ENCODE measurements at regions of chr21 and their contacts with region 1.

Region 1: GRCh38 chr21:38229260-38229868 is 27.4 kb upstream of the KCNJ15 start:
- DNase-seq: peak; percentile 20
- H3K4me3 ChIP-seq: no peak overlapping the region
- H3K27ac ChIP-seq: no peak overlapping the region
- H3K4me1 ChIP-seq: peaks cover 14% of the 10 kb centered on the region
- H3K27me3 ChIP-seq: no peaks in the 10 kb centered on the region
- CTCF ChIP-seq: no peak

Region 2: GRCh38 chr21:38349111-38349746 is 119.9 kb after region 1 on chr21:
- CTCF ChIA-PET with region 1: interaction called, 5 read pairs
- dilution Hi-C with region 1: loop called (anchors 5 kb)
- in situ Hi-C with region 1: no loop called
- intact Hi-C with region 1: loop called (anchors 1 kb)
- DNase-seq: no peak
- H3K4me3 ChIP-seq: no peak overlapping the region
- H3K27ac ChIP-seq: no peak overlapping the region
- H3K4me1 ChIP-seq: peaks cover 15% of the 10 kb centered on the region
- H3K27me3 ChIP-seq: no peaks in the 10 kb centered on the region
- CTCF ChIP-seq: no peak